Heart left ventricle (tissue), 16 donors: ENCODE measurements at regions of chr2 and their contacts with region 1.

Region 1: GRCh38 chr2:170235860-170236679 is 58.1 kb downstream of the MYO3B start:
- DNase-seq: no peak
- ATAC-seq: peak in 3 of 4 donors; percentile 29 to 45 (median 30)
- H3K4me3 ChIP-seq: no peak overlapping the region
- H3K27ac ChIP-seq: no peak overlapping the region
- H3K4me1 ChIP-seq: no peaks in the 10 kb centered on the region
- H3K27me3 ChIP-seq: peaks cover 0 to 18% (median 0%) of the 10 kb centered on the region in 9 donors
- CTCF ChIP-seq: peak; percentile 17 to 56 (median 46)
- POLR2A ChIP-seq: no peak

Region 2: GRCh38 chr2:169694113-169694903 is 541.8 kb before region 1 on chr2 and contains the starts of genes CFAP210 and PHOSPHO2:
- intact Hi-C with region 1: no loop called
- DNase-seq: peak; percentile 98 to 100 (median 99)
- ATAC-seq: peak; percentile 99 to 100 (median 100)
- H3K4me3 ChIP-seq: peak within 1 kb of the TSS; percentile 57 to 96 (median 76)
- H3K27ac ChIP-seq: peak within 1 kb of the TSS in 11 of 12 donors; percentile 67 to 93 (median 83)
- H3K4me1 ChIP-seq: peaks cover 0 to 16% (median 5%) of the 10 kb centered on the region in 12 donors
- H3K27me3 ChIP-seq: no peaks in the 10 kb centered on the region
- CTCF ChIP-seq: no peak
- POLR2A ChIP-seq: peak in 1 of 2 donors; percentile 87
- total RNA-seq, gene CFAP210: not detected
- total RNA-seq, gene PHOSPHO2: 1.5 to 5.4 (median 3.0) TPM

Region 3: GRCh38 chr2:170873035-170873692 is 637.1 kb after region 1 on chr2:
- intact Hi-C with region 1: loop called in 1 of 10 experiments (anchors 5 kb)
- DNase-seq: peak; percentile 50 to 76 (median 59)
- ATAC-seq: peak; percentile 64 to 90 (median 85)
- H3K4me3 ChIP-seq: peak overlapping the region in 5 of 12 donors; percentile 33 to 41 (median 40)
- H3K27ac ChIP-seq: no peak overlapping the region
- H3K4me1 ChIP-seq: peaks cover 0 to 8% (median 3%) of the 10 kb centered on the region in 12 donors
- H3K27me3 ChIP-seq: peaks cover 0 to 8% (median 0%) of the 10 kb centered on the region in 9 donors
- CTCF ChIP-seq: peak; percentile 75 to 92 (median 85)
- POLR2A ChIP-seq: no peak